Sigmoid colon (tissue), 7 donors: ENCODE measurements at regions of chr12 and their contacts with region 1.

Region 1: GRCh38 chr12:12032851-12033588 is 37.7 kb upstream of the BCL2L14 start:
- DNase-seq: peak; percentile 87
- H3K4me3 ChIP-seq: peak overlapping the region; percentile 24 to 49 (median 42)
- H3K27ac ChIP-seq: peak overlapping the region; percentile 79 to 83 (median 79)
- H3K4me1 ChIP-seq: peaks cover 0 to 10% (median 8%) of the 10 kb centered on the region in 4 donors
- H3K27me3 ChIP-seq: no peaks in the 10 kb centered on the region
- CTCF ChIP-seq: peak; percentile 82 to 89 (median 86)
- EP300 ChIP-seq: no peak
- POLR2A ChIP-seq: no peak

Region 2: GRCh38 chr12:11553871-11554533 is 479.0 kb before region 1 on chr12:
- intact Hi-C with region 1: loop called (anchors 1 kb)
- DNase-seq: peak; percentile 72
- H3K4me3 ChIP-seq: no peak overlapping the region
- H3K27ac ChIP-seq: peak overlapping the region in 3 of 4 donors; percentile 85 to 89 (median 87)
- H3K4me1 ChIP-seq: peaks cover 0 to 32% (median 26%) of the 10 kb centered on the region in 4 donors
- H3K27me3 ChIP-seq: no peaks in the 10 kb centered on the region
- CTCF ChIP-seq: peak; percentile 27 to 56 (median 51)
- EP300 ChIP-seq: no peak
- POLR2A ChIP-seq: no peak

Region 3: GRCh38 chr12:11581179-11581755 is 451.8 kb before region 1 on chr12:
- intact Hi-C with region 1: loop called (anchors 1 kb)
- DNase-seq: peak; percentile 81
- H3K4me3 ChIP-seq: no peak overlapping the region
- H3K27ac ChIP-seq: peak overlapping the region in 2 of 4 donors; percentile 59 to 69
- H3K4me1 ChIP-seq: peaks cover 0 to 33% (median 20%) of the 10 kb centered on the region in 4 donors
- H3K27me3 ChIP-seq: no peaks in the 10 kb centered on the region
- CTCF ChIP-seq: peak; percentile 28 to 80 (median 56)
- EP300 ChIP-seq: no peak
- POLR2A ChIP-seq: no peak

Region 4: GRCh38 chr12:11719678-11720099 is 313.3 kb before region 1 on chr12:
- intact Hi-C with region 1: loop called (anchors 10 kb)
- DNase-seq: peak; percentile 76
- H3K4me3 ChIP-seq: no peak overlapping the region
- H3K27ac ChIP-seq: peak overlapping the region; percentile 60 to 79 (median 70)
- H3K4me1 ChIP-seq: peaks cover 0 to 73% (median 54%) of the 10 kb centered on the region in 4 donors
- H3K27me3 ChIP-seq: no peaks in the 10 kb centered on the region
- CTCF ChIP-seq: no peak
- EP300 ChIP-seq: no peak
- POLR2A ChIP-seq: no peak

Region 5: GRCh38 chr12:11969437-11970154 is 63.4 kb before region 1 on chr12:
- intact Hi-C with region 1: no loop called
- DNase-seq: no peak
- H3K4me3 ChIP-seq: no peak overlapping the region
- H3K27ac ChIP-seq: no peak overlapping the region
- H3K4me1 ChIP-seq: no peaks in the 10 kb centered on the region
- H3K27me3 ChIP-seq: no peaks in the 10 kb centered on the region
- CTCF ChIP-seq: no peak
- EP300 ChIP-seq: no peak
- POLR2A ChIP-seq: no peak